Upper lobe of right lung (tissue), 1 donor: ENCODE measurements at regions of chr4 and their contacts with region 1.

Region 1: DNA sequence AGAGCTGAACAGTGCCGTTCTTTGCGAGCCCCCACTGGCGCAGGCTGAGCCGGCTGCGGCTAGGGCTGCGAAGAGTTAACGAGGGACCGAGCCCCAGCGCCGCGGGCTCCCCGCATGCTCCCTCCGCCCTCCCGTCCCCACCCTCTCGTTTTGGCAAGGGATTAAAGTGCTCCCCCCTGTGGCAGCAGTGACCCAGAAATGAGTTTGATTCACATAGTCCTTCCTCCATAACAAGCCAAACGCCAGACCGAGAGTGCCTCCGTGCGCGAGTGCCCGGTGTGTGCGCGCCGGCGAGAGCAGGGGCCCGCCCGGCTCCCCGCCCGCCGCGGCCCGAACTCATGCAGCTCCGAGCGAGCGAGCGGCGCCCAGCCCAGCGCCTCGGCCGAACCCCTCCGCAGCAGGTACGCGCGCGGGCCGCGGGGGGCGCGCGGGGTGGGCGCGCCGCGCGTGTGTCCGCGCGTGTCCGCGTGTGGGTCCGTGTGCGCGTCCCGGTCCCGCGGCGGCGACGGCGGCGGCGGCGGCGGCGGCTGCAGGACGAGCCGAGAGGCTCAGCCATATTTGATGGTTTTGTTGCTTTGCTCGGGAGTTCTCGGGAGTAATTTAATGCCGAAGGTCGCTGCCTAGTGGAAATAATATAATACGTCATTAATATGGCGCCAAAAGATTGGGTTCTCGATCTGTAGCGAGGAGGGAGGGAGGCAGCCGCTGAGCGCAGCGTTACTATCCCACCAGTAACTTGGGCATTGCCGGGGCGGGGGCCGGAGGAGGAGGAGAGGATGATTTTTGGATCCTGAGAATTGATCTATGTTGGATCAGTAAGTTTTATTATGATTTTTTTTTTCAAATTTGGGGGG is at the start of gene JADE1:
- DNase-seq: peak; percentile 94
- ATAC-seq: peak; percentile 88
- H3K4me3 ChIP-seq: peak within 1 kb of the TSS; percentile 85
- H3K27ac ChIP-seq: peak within 1 kb of the TSS; percentile 94
- H3K4me1 ChIP-seq: peaks cover 4% of the 10 kb centered on the region
- H3K27me3 ChIP-seq: no peaks in the 10 kb centered on the region
- CTCF ChIP-seq: peak; percentile 57
- total RNA-seq, gene JADE1: 41.7 TPM

Region 2: GRCh38 chr4:127985995-127986394 is 823.7 kb before region 1 on chr4:
- intact Hi-C with region 1: no loop called
- DNase-seq: no peak
- ATAC-seq: no peak
- H3K4me3 ChIP-seq: no peak overlapping the region
- H3K27ac ChIP-seq: no peak overlapping the region
- H3K4me1 ChIP-seq: no peaks in the 10 kb centered on the region
- H3K27me3 ChIP-seq: no peaks in the 10 kb centered on the region
- CTCF ChIP-seq: no peak

Region 3: DNA sequence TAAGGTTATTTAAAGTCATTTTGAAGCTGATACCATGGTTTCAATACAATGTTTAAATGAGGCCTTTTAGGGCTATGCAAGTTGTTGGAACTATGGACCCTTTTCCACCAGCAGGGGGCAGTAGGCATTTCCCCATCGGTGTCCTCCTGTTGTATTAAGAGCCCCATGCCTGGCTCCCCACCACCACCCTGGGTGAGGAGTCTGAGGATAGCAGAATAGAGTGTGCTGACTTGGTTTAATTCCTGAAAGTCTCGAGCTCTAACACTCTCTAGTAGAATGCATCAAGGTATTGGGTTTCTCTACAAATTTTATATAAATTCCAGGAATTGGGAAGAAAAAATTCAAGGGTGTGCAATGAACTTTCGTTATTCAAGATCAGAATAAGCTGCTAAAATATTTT is 235.0 kb before region 1 on chr4:
- intact Hi-C with region 1: loop called (anchors 10 kb)
- DNase-seq: peak; percentile 76
- ATAC-seq: peak; percentile 86
- H3K4me3 ChIP-seq: no peak overlapping the region
- H3K27ac ChIP-seq: no peak overlapping the region
- H3K4me1 ChIP-seq: peaks cover 23% of the 10 kb centered on the region
- H3K27me3 ChIP-seq: no peaks in the 10 kb centered on the region
- CTCF ChIP-seq: peak; percentile 67